Left ventricle myocardium inferior (tissue), 1 donor: ENCODE measurements at regions of chr1 and their contacts with region 1.

Region 1: GRCh38 chr1:232837087-232837486 is 31.9 kb downstream of the MAP10 start:
- DNase-seq: no peak
- H3K4me3 ChIP-seq: no peak overlapping the region
- H3K27ac ChIP-seq: no peak overlapping the region
- H3K4me1 ChIP-seq: peaks cover 7% of the 10 kb centered on the region
- H3K27me3 ChIP-seq: no peaks in the 10 kb centered on the region
- CTCF ChIP-seq: no peak

Region 2: GRCh38 chr1:232589812-232590743 is 247.0 kb before region 1 on chr1:
- intact Hi-C with region 1: no loop called
- DNase-seq: no peak
- H3K4me3 ChIP-seq: peak overlapping the region; percentile 18
- H3K27ac ChIP-seq: peak overlapping the region; percentile 75
- H3K4me1 ChIP-seq: peaks cover 91% of the 10 kb centered on the region
- H3K27me3 ChIP-seq: no peaks in the 10 kb centered on the region
- CTCF ChIP-seq: no peak

Region 3: DNA sequence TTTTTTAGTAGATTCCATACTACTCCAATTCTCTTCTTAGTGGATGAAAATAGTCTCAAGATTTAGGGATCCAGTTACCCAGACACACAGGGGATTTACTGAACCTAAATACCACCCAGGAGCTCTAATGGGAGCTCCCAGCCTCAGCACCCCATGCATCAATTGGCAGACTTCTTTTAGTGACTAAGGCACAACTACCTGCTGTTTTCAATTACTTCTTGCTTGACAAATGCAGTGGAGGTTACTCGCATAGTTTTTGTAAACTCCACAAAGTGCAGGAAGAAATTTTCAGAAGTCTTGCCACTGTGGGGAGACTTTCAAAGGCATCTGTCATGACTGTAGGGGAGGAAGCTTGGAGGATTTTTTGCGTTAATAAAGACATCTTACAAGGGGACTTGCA is 67.4 kb before region 1 on chr1:
- intact Hi-C with region 1: loop called (anchors 10 kb)
- DNase-seq: no peak
- H3K4me3 ChIP-seq: no peak overlapping the region
- H3K27ac ChIP-seq: no peak overlapping the region
- H3K4me1 ChIP-seq: peaks cover 13% of the 10 kb centered on the region
- H3K27me3 ChIP-seq: no peaks in the 10 kb centered on the region
- CTCF ChIP-seq: no peak

Region 4: DNA sequence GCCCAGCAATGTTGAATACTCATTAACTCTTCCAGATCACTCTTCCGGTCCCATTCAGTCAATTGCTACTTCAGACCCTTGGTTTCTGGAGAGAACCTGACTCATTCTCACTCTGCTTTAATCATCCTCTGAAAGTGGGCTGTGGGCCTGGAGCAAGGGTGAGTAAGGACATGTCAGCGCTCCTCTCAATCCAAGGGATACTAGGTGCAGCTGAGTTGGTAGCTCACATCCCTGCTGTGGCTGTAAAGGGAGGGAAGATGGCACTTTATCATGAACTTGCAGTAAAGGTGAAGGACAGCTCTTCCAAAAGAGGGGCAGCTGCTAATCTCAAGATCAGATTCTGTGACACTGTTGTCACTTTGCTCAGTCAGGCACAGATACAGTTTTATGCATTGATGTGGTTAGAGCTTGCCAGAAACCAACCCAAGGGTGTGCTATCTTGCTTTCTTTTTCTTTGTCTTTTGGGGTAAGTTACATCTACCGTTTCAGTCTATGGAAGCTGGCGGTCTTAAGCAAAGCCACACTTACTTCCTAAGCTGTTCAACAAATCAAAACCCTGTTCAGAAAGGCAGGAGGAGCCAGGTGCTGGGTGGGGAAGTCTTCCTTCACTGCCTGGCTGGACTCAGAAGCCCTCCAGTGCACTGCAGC is 86.8 kb after region 1 on chr1:
- intact Hi-C with region 1: no loop called
- DNase-seq: no peak
- H3K4me3 ChIP-seq: no peak overlapping the region
- H3K27ac ChIP-seq: no peak overlapping the region
- H3K4me1 ChIP-seq: peaks cover 20% of the 10 kb centered on the region
- H3K27me3 ChIP-seq: no peaks in the 10 kb centered on the region
- CTCF ChIP-seq: no peak

Region 5: GRCh38 chr1:232952514-232953499 is 115.7 kb after region 1 on chr1:
- intact Hi-C with region 1: no loop called
- DNase-seq: no peak
- H3K4me3 ChIP-seq: no peak overlapping the region
- H3K27ac ChIP-seq: no peak overlapping the region
- H3K4me1 ChIP-seq: peaks cover 39% of the 10 kb centered on the region
- H3K27me3 ChIP-seq: no peaks in the 10 kb centered on the region
- CTCF ChIP-seq: peak; percentile 73